Esophagus muscularis mucosa (tissue), 4 donors: ENCODE measurements at regions of chr18 and their contacts with region 1.

Region 1: GRCh38 chr18:80034068-80034851 is at the start of gene RBFA:
- DNase-seq: peak; percentile 100
- H3K4me3 ChIP-seq: peak within 1 kb of the TSS; percentile 68 to 84 (median 74)
- H3K27ac ChIP-seq: peak within 1 kb of the TSS; percentile 82 to 93 (median 86)
- H3K4me1 ChIP-seq: peaks cover 8 to 27% (median 19%) of the 10 kb centered on the region in 4 donors
- H3K27me3 ChIP-seq: no peaks in the 10 kb centered on the region
- CTCF ChIP-seq: peak; percentile 40 to 63 (median 41)
- EP300 ChIP-seq: no peak
- POLR2A ChIP-seq: peak; percentile 55
- total RNA-seq, gene RBFA: 22.0 to 32.0 (median 25.6) TPM

Region 2: GRCh38 chr18:79679111-79679872 is 355.0 kb before region 1 on chr18 and contains the start of gene CTDP1:
- intact Hi-C with region 1: loop called (anchors 5 kb)
- DNase-seq: peak; percentile 99
- H3K4me3 ChIP-seq: peak within 1 kb of the TSS; percentile 86 to 94 (median 93)
- H3K27ac ChIP-seq: peak within 1 kb of the TSS; percentile 91 to 99 (median 96)
- H3K4me1 ChIP-seq: peaks cover 39 to 52% (median 47%) of the 10 kb centered on the region in 4 donors
- H3K27me3 ChIP-seq: no peaks in the 10 kb centered on the region
- CTCF ChIP-seq: no peak
- EP300 ChIP-seq: peak; percentile 8
- POLR2A ChIP-seq: peak; percentile 59
- total RNA-seq, gene CTDP1: 22.0 to 28.5 (median 24.5) TPM

Region 3: DNA sequence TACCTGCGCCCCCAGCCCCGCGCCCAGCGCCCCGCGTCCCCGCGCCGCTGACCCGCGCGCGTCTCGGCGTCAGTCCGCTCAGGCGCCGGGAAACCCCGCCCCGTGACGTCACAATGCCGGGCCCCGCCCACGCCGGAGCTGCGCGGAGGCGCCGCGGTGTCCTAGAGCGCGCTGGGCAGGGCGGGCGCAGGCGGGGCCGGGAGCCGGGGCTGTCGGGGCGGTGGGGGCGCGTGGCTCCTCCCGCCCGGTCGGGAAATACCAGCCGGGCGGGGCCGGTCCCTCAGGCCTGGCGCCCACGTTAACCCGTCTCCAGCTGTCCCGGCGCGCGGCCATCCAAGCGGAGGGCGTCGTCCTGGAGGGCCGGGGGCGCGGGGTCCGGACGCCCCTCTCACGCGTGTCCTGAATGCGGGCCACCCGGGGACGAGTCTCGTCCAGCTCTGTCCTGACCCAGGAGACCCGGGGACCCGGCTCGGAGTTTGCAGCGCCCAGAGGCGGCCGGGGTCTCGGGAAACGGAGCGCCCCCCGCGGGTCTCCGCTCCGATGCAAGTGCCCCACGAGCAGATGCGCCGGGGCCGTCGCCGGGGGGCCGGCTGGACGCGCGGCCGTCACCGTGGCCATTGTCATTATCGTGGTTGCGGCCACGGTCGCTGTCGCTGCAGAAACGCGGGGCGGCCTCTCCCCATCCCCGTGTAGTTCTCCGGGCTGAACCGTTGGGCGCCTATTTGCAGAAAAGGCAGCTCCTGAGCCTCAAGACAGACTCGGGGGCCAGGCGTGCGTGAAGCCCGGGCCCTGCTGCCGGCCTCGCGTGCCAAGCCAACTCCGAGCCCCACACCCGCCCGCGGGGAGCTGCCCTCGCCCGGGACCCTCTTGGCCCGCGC is 82.4 kb before region 1 on chr18 and contains the start of gene SLC66A2:
- intact Hi-C with region 1: loop called (anchors 2 kb)
- DNase-seq: peak; percentile 97
- H3K4me3 ChIP-seq: peak within 1 kb of the TSS; percentile 78 to 99 (median 98)
- H3K27ac ChIP-seq: peak within 1 kb of the TSS; percentile 84 to 90 (median 89)
- H3K4me1 ChIP-seq: peaks cover 38 to 55% (median 45%) of the 10 kb centered on the region in 4 donors
- H3K27me3 ChIP-seq: no peaks in the 10 kb centered on the region
- CTCF ChIP-seq: peak in 1 of 3 experiments; percentile 8
- EP300 ChIP-seq: no peak
- POLR2A ChIP-seq: no peak
- total RNA-seq, gene SLC66A2: 27.0 to 46.4 (median 41.5) TPM

Region 4: DNA sequence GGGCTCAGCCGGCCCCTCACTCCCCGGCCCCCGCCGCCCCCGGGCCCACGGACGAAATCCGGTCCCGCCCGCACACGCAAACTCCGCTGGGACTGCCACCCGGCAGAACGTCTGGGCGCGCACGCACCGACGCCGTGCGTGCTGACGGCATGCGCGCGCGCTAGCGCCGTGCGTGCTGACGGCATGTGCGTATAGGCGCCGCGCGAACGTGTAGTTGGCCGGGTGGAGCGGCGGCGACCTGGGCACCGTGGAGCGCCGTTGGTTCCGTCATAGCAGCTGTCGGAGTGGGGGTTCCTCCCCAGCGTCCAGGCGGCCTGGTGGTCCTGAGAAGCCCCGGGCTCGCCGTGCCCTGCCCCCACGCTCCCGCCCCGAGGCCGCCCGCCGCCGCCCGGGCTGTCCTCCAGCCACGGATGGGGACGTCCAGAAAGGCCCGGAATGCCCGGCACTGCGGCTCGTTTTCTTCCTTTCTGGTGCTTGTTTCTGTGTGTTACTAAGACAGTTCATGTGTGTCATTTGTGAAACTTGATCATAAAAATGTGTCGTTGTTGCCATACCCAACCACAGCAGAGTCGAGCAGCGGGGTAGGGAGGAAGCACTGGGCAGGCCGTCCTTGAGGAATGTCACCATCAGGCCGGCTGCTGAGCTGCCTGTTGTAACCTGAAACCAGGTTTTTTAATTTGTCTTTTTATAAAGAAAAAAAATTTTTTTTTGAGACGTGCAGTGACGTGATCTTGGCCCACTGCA is 45.6 kb before region 1 on chr18 and contains the start of gene TXNL4A:
- intact Hi-C with region 1: loop called (anchors 2 kb)
- DNase-seq: no peak
- H3K4me3 ChIP-seq: peak within 1 kb of the TSS; percentile 81 to 98 (median 91)
- H3K27ac ChIP-seq: peak within 1 kb of the TSS; percentile 94 to 99 (median 98)
- H3K4me1 ChIP-seq: peaks cover 19 to 47% (median 32%) of the 10 kb centered on the region in 4 donors
- H3K27me3 ChIP-seq: no peaks in the 10 kb centered on the region
- CTCF ChIP-seq: no peak
- EP300 ChIP-seq: no peak
- POLR2A ChIP-seq: peak; percentile 82
- total RNA-seq, gene TXNL4A: 21.6 to 44.9 (median 38.9) TPM

Region 5: GRCh38 chr18:80108728-80109675 is 74.7 kb after region 1 on chr18 and contains the start of gene ADNP2:
- intact Hi-C with region 1: loop called (anchors 5 kb)
- DNase-seq: peak; percentile 97
- H3K4me3 ChIP-seq: peak within 1 kb of the TSS; percentile 68 to 89 (median 80)
- H3K27ac ChIP-seq: peak within 1 kb of the TSS; percentile 93 to 96 (median 95)
- H3K4me1 ChIP-seq: peaks cover 13 to 60% (median 38%) of the 10 kb centered on the region in 4 donors
- H3K27me3 ChIP-seq: no peaks in the 10 kb centered on the region
- CTCF ChIP-seq: no peak
- EP300 ChIP-seq: no peak
- POLR2A ChIP-seq: peak; percentile 10
- total RNA-seq, gene ADNP2: 17.1 to 18.9 (median 17.3) TPM